ENCODE measurements at regions of chr20 and their contacts with region 1.

Region 1: GRCh38 chr20:54649511-54649962 is 174.1 kb downstream of the DOK5 start:
- DNase-seq: peak; percentile 79 to 89
- ATAC-seq: no peak
- H3K4me3 ChIP-seq: no peak overlapping the region
- H3K27ac ChIP-seq: no peak overlapping the region
- H3K4me1 ChIP-seq: no peaks in the 10 kb centered on the region
- H3K27me3 ChIP-seq: no peaks in the 10 kb centered on the region

Region 2: DNA sequence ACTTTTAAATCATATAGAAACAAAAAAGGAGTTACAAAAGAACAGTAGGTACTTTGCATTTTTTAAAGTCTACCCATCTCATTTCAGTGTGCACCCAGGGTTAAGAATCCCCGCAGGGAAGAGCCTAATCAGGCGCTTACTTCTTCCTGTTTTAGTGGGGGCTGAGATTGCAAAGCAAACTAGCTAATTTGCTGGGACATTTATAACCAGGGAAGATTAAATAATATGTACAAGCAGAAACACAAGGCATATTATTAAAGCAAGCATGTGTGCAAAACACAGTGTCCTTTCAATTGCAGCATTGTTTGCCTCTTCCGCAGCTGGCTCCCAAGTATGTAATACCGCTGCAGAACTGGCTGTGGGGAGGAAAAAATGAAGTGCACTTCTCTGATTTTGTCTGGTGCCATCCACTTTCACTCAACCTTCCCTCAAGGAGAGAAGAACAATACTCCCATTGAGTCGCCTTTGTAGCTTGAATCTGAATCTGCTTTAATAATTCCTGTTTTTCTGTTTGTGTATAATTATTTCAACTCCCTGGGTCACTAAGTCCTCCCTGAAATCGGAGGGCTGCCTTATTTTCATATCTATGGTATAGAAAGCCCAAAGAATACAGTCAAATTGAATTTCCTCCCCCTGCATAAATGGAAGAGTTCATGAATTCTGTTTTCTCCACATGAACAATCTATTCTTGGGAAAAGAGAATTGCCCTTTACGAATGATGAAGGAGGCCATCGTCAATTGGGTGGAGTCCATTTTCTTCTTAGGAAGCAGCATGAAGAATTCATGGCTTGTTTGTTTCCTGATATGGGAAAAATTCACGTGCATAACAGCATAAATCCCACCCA is 555.9 kb before region 1 on chr20:
- intact Hi-C with region 1: loop called (anchors 5 to 10 kb)
- DNase-seq: no peak
- ATAC-seq: no peak
- H3K4me3 ChIP-seq: no peak overlapping the region
- H3K27ac ChIP-seq: no peak overlapping the region
- H3K4me1 ChIP-seq: no peaks in the 10 kb centered on the region
- H3K27me3 ChIP-seq: no peaks in the 10 kb centered on the region

Region 3: GRCh38 chr20:54219751-54220426 is 429.6 kb before region 1 on chr20:
- intact Hi-C with region 1: loop called (anchors 2 to 5 kb)
- DNase-seq: no peak
- ATAC-seq: no peak
- H3K4me3 ChIP-seq: no peak overlapping the region
- H3K27ac ChIP-seq: no peak overlapping the region
- H3K4me1 ChIP-seq: peaks cover 2 to 5% of the 10 kb centered on the region in 2 donors
- H3K27me3 ChIP-seq: no peaks in the 10 kb centered on the region

Region 4: GRCh38 chr20:54345301-54345724 is 304.2 kb before region 1 on chr20:
- intact Hi-C with region 1: loop called in 1 of 2 experiments (anchors 10 kb)
- DNase-seq: no peak
- ATAC-seq: peak; percentile 72
- H3K4me3 ChIP-seq: no peak overlapping the region
- H3K27ac ChIP-seq: no peak overlapping the region
- H3K4me1 ChIP-seq: no peaks in the 10 kb centered on the region
- H3K27me3 ChIP-seq: no peaks in the 10 kb centered on the region

Measured in aorta (tissue), 5 donors.